ENCODE measurements at regions of chr11 and their contacts with region 1.

Region 1: GRCh38 chr11:71563401-71563800 is 2.0 kb upstream of the KRTAP5-10 start:
- DNase-seq: no peak
- ATAC-seq: no peak
- H3K4me3 Mint-ChIP-seq: no peak overlapping the region
- H3K27ac Mint-ChIP-seq: no peak overlapping the region
- H3K4me1 Mint-ChIP-seq: no peaks in the 10 kb centered on the region
- H3K27me3 Mint-ChIP-seq: peaks cover 42% of the 10 kb centered on the region
- CTCF ChIP-seq: no peak

Region 2: DNA sequence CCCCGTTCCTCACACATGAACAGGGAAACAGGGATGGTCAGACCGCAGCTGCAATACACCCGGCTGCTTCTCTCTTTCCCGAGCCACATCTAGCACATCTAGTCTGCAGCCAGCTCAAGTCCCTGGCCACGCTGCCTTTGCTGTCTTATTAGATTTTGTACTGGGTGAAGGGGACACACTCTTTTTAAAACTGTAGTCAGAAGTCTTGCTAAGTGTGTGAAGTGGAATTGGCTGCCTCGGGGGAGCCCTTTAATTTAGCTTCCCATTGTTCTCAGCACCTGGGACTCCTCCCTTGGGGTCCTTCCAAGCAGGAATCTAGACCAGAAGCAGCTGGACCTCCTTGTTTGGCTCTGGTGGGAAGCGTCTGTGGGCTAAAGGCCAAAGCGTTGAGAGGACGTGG is 745.0 kb before region 1 on chr11:
- CTCF ChIA-PET with region 1: no interaction called
- POLR2A ChIA-PET with region 1: no interaction called
- intact Hi-C with region 1: loop called (anchors 5 kb)
- DNase-seq: no peak
- ATAC-seq: no peak
- H3K4me3 Mint-ChIP-seq: no peak overlapping the region
- H3K27ac Mint-ChIP-seq: no peak overlapping the region
- H3K4me1 Mint-ChIP-seq: no peaks in the 10 kb centered on the region
- H3K27me3 Mint-ChIP-seq: peaks cover 4% of the 10 kb centered on the region
- CTCF ChIP-seq: no peak

Region 3: DNA sequence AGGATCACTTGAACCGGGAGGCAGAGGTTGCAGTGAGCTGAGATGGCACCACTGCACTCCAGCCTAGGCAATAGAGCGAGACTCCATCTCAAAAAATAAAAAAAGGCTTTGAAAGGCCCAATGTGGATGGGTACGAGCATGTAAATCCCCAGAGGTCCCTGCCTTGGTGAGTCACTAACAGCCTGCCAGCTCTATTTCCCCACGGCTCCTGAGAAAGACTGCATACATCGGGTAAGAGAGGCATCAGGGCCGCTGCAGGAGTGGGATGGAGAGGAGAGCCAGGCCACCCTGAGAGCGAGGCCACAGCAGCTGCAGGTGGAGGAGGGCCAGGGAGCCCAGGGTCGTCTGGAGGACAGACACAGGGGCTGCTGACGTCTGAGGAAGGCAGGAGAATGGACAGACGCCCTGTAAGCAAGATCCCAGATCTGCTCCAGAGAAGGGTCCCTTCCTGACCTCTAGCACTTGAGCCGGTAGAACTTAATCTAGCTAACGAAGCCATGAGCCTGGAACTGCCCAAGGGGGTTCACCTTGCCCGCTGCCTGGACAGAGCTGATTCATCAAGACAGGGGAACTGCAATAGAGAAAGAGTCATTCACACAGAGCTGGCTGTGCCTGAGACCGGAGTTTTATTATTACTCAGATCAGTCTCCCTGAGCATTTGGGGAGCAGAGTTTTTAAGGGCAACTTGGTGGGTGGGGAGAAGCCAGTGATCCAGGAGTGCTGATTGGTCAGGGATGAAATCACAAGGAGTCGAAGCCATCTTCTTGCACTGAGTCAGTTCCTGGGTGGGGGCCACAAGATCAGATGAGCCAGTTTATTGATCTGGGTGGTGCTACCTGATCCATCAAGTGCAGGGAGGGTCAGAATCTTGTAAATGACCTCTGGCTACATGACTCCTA is 20.3 kb before region 1 on chr11:
- CTCF ChIA-PET with region 1: no interaction called
- POLR2A ChIA-PET with region 1: no interaction called
- intact Hi-C with region 1: no loop called
- DNase-seq: no peak
- ATAC-seq: no peak
- H3K4me3 Mint-ChIP-seq: peak overlapping the region; percentile 44
- H3K27ac Mint-ChIP-seq: no peak overlapping the region
- H3K4me1 Mint-ChIP-seq: peaks cover 18% of the 10 kb centered on the region
- H3K27me3 Mint-ChIP-seq: peaks cover 13% of the 10 kb centered on the region
- CTCF ChIP-seq: no peak

Region 4: GRCh38 chr11:71991494-71991893 is 428.1 kb after region 1 on chr11:
- CTCF ChIA-PET with region 1: no interaction called
- POLR2A ChIA-PET with region 1: no interaction called
- intact Hi-C with region 1: no loop called
- DNase-seq: no peak
- ATAC-seq: peak; percentile 82
- H3K4me3 Mint-ChIP-seq: peak overlapping the region; percentile 62
- H3K27ac Mint-ChIP-seq: peak overlapping the region; percentile 82
- H3K4me1 Mint-ChIP-seq: peaks cover 60% of the 10 kb centered on the region
- H3K27me3 Mint-ChIP-seq: no peaks in the 10 kb centered on the region
- CTCF ChIP-seq: no peak

Measured in activated B cell treated with CpG ODN at 0.5 μM for 24 hours (primary cell).